Psoas muscle (tissue), 8 donors: ENCODE measurements at regions of chr3 and their contacts with region 1.

Region 1: GRCh38 chr3:28151608-28152228 is 89.7 kb upstream of the CMC1 start:
- DNase-seq: no peak
- ATAC-seq: no peak
- H3K4me3 ChIP-seq: no peak overlapping the region
- H3K27ac ChIP-seq: no peak overlapping the region
- H3K4me1 ChIP-seq: no peaks in the 10 kb centered on the region
- H3K27me3 ChIP-seq: no peaks in the 10 kb centered on the region
- CTCF ChIP-seq: no peak

Region 2: GRCh38 chr3:27449530-27450150 is 702.1 kb before region 1 on chr3:
- intact Hi-C with region 1: loop called in 1 of 2 experiments (anchors 10 kb)
- DNase-seq: no peak
- ATAC-seq: no peak
- H3K4me3 ChIP-seq: no peak overlapping the region
- H3K27ac ChIP-seq: no peak overlapping the region
- H3K4me1 ChIP-seq: no peaks in the 10 kb centered on the region
- H3K27me3 ChIP-seq: no peaks in the 10 kb centered on the region
- CTCF ChIP-seq: no peak